PC-9 (cell line): ENCODE measurements at regions of chr7 and their contacts with region 1.

Region 1: GRCh38 chr7:37234928-37235327 is 213.7 kb downstream of the ELMO1 start:
- DNase-seq: no peak
- H3K4me3 ChIP-seq: no peak overlapping the region
- H3K27ac ChIP-seq: no peak overlapping the region
- H3K4me1 ChIP-seq: no peaks in the 10 kb centered on the region
- H3K27me3 ChIP-seq: peaks cover 13% of the 10 kb centered on the region
- CTCF ChIP-seq: peak; percentile 77

Region 2: DNA sequence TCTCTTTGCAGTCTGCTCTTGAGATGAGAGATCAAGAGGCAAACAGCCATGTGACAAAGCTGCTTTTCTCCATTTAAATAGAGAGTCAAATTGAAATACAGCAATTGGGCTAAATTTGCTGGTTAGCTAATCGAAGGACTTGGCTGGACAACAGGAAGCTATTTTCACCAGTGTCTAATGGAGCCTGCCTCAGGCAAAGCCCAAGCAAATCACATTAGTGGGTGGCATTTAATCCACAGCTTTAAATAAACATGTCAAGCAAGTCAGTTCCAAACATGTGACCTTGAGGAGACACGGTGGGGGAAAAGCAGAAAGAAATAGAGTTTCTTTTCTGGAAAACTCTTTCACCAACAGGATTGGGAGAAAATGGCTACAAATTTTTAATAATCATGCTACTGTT is 330.1 kb before region 1 on chr7:
- CTCF ChIA-PET with region 1: no interaction called
- POLR2A ChIA-PET with region 1: no interaction called
- intact Hi-C with region 1: no loop called
- DNase-seq: no peak
- H3K4me3 ChIP-seq: no peak overlapping the region
- H3K27ac ChIP-seq: no peak overlapping the region
- H3K4me1 ChIP-seq: no peaks in the 10 kb centered on the region
- H3K27me3 ChIP-seq: 0 out of 2 replicates have a peak, but pooled peaks cover 8% of the 10 kb centered on the region
- CTCF ChIP-seq: no peak

Region 3: GRCh38 chr7:37495574-37496184 is 260.8 kb after region 1 on chr7:
- CTCF ChIA-PET with region 1: no interaction called
- POLR2A ChIA-PET with region 1: no interaction called
- intact Hi-C with region 1: loop called (anchors 5 kb)
- DNase-seq: peak in 1 of 2 experiments; percentile 43
- H3K4me3 ChIP-seq: no peak overlapping the region
- H3K27ac ChIP-seq: no peak overlapping the region
- H3K4me1 ChIP-seq: no peaks in the 10 kb centered on the region
- H3K27me3 ChIP-seq: peaks cover 9% of the 10 kb centered on the region; the same call in 1 of the 2 replicates
- CTCF ChIP-seq: peak; percentile 90

Region 4: GRCh38 chr7:37510043-37510634 is 275.2 kb after region 1 on chr7:
- CTCF ChIA-PET with region 1: no interaction called
- POLR2A ChIA-PET with region 1: no interaction called
- intact Hi-C with region 1: loop called (anchors 2 kb)
- DNase-seq: no peak
- H3K4me3 ChIP-seq: no peak overlapping the region
- H3K27ac ChIP-seq: no peak overlapping the region
- H3K4me1 ChIP-seq: no peaks in the 10 kb centered on the region
- H3K27me3 ChIP-seq: no peaks in the 10 kb centered on the region
- CTCF ChIP-seq: peak; percentile 77

Region 5: DNA sequence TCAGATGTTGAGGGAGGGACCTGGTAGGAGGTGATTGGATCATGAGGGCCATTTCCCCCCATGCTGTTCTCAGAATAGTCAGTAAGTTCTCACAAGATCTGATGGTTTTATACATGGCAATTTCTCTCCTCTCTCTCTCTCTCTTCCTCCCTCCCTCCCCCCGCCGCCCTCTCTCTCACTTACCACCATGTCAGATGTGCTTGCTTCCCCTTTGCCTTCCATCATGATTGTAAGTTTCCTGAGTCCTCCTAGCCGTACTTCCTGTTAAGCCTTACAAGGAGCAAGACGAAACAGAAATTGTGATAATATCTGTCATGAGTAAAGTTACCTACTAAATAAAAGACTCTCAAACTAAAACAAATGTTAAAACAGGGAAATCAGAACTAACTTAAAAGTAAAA is 428.8 kb after region 1 on chr7:
- CTCF ChIA-PET with region 1: no interaction called
- POLR2A ChIA-PET with region 1: no interaction called
- intact Hi-C with region 1: no loop called
- DNase-seq: no peak
- H3K4me3 ChIP-seq: no peak overlapping the region
- H3K27ac ChIP-seq: no peak overlapping the region
- H3K4me1 ChIP-seq: no peaks in the 10 kb centered on the region
- H3K27me3 ChIP-seq: peaks cover 21% of the 10 kb centered on the region; the same call in 1 of the 2 replicates
- CTCF ChIP-seq: no peak

Region 6: GRCh38 chr7:37833107-37833817 is 598.3 kb after region 1 on chr7:
- CTCF ChIA-PET with region 1: no interaction called
- POLR2A ChIA-PET with region 1: interaction called, 4 read pairs
- intact Hi-C with region 1: loop called (anchors 5 kb)
- DNase-seq: peak in 1 of 2 experiments; percentile 40
- H3K4me3 ChIP-seq: no peak overlapping the region
- H3K27ac ChIP-seq: no peak overlapping the region
- H3K4me1 ChIP-seq: no peaks in the 10 kb centered on the region
- H3K27me3 ChIP-seq: no peaks in the 10 kb centered on the region
- CTCF ChIP-seq: peak; percentile 91